ENCODE measurements at regions of chr4 and their contacts with region 1.

Region 1: DNA sequence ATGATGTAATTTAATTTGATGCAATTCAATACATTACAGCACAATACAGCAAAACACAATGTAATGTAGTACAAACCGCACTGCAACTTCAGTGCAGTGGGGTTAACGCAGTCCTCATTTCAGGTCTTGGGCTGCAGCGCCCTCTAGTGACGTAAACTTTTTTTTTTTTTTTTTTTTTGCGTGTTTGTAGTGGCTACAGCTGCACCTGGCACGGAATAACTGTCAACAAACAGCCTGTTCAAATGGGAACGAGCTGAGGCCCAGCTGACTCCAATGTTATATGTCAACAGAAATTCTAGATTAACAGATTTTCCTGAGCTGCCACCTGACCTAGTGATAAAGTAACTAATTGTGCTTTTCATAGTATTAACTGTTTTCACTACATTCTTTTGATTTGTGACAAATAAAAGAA is 33.5 kb upstream of the RASSF6 start:
- DNase-seq: peak; percentile 81 to 86
- H3K4me3 ChIP-seq: no peak overlapping the region
- H3K27ac ChIP-seq: no peak overlapping the region
- H3K4me1 ChIP-seq: peaks cover 0 to 20% (median 12%) of the 10 kb centered on the region in 4 donors
- H3K27me3 ChIP-seq: no peaks in the 10 kb centered on the region
- CTCF ChIP-seq: peak in 5 of 7 experiments; percentile 6 to 77 (median 60)
- EP300 ChIP-seq: no peak
- POLR2A ChIP-seq: no peak

Region 2: DNA sequence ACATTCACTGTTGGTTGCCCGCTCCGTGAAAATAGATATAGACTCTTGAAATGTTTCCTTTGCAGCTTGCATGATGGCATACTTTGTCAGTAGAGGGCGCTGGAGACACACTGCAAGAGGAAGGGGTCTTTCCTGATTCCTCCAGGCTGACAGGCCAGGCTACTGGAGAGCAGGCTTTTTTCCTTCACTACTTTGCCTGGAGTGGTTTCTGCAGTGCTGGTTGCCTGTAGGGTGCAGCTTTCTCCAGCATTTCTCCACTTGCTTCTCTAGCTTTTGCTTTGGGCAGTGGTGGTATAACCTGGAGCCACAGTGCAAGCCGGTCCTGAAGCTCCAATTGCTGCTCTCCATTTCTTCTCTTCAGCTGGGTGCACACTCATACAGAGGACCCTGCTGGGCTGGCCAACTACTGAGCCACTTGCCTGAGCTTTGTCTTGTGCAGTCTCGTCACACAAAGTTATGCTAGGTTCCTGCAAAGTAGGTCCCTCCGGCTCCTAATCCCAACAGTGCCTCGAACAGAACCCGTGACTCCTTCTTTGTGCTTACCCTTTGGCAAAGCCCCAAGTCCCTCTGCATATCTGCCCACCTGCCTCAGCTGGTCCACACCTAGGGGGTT is 79.8 kb before region 1 on chr4:
- intact Hi-C with region 1: loop called (anchors 10 kb)
- DNase-seq: peak; percentile 80 to 94
- H3K4me3 ChIP-seq: no peak overlapping the region
- H3K27ac ChIP-seq: peak overlapping the region; percentile 27 to 68 (median 34)
- H3K4me1 ChIP-seq: peaks cover 0 to 24% (median 15%) of the 10 kb centered on the region in 4 donors
- H3K27me3 ChIP-seq: no peaks in the 10 kb centered on the region
- CTCF ChIP-seq: peak in 5 of 7 experiments; percentile 63 to 82 (median 71)
- EP300 ChIP-seq: no peak
- POLR2A ChIP-seq: no peak